Calu3 (cell line): ENCODE measurements at regions of chr3 and their contacts with region 1.

Region 1: GRCh38 chr3:9878700-9879099 is 1.4 kb downstream of the CIDEC start:
- DNase-seq: peak; percentile 72
- H3K4me3 Mint-ChIP-seq: no peak overlapping the region
- H3K27ac Mint-ChIP-seq: no peak overlapping the region
- H3K4me1 Mint-ChIP-seq: peaks cover 25% of the 10 kb centered on the region
- H3K27me3 Mint-ChIP-seq: no peaks in the 10 kb centered on the region
- CTCF ChIP-seq: no peak

Region 2: GRCh38 chr3:10115326-10116137 is 236.8 kb after region 1 on chr3 and contains the start of gene BRK1:
- CTCF ChIA-PET with region 1: interaction called, 10 read pairs
- intact Hi-C with region 1: no loop called
- DNase-seq: peak; percentile 87
- H3K4me3 Mint-ChIP-seq: peak within 1 kb of the TSS; percentile 99
- H3K27ac Mint-ChIP-seq: peak within 1 kb of the TSS; percentile 95
- H3K4me1 Mint-ChIP-seq: no peaks in the 10 kb centered on the region
- H3K27me3 Mint-ChIP-seq: no peaks in the 10 kb centered on the region
- CTCF ChIP-seq: no peak
- total RNA-seq, gene BRK1: 120 and 126 TPM in 2 replicates

Region 3: DNA sequence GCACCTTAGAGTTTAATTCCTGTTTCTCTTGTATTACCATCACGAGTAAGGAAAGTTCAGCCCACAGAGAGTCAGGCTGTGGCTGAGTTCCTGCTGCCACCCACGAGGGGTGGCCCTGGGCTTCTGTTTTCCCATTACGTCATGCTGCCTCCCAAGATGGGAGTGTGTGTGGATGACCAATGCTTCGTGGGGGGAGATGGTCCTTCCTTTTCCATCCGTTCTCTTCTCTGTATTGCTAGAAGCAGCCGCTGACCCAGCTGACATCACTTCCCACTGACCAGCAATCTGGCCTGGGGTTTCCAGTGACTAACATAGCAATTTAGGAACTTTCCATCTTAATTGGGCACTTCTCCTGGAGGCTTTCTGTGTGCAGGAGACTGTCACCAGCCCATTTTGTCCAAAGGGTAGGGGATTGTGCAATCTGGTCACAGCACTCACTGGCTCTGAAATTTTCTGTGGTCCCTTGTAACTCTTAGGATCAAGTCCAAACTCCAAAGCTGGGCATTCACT is 295.3 kb after region 1 on chr3:
- CTCF ChIA-PET with region 1: no interaction called
- intact Hi-C with region 1: no loop called
- DNase-seq: peak; percentile 58
- H3K4me3 Mint-ChIP-seq: no peak overlapping the region
- H3K27ac Mint-ChIP-seq: peak overlapping the region; percentile 83
- H3K4me1 Mint-ChIP-seq: peaks cover 23% of the 10 kb centered on the region
- H3K27me3 Mint-ChIP-seq: no peaks in the 10 kb centered on the region
- CTCF ChIP-seq: no peak